Activated CD8-positive, alpha-beta T cell treated with anti-CD3 and anti-CD28 coated beads for 36 hours (primary cell): ENCODE measurements at regions of chr14 and their contacts with region 1.

Region 1: GRCh38 chr14:93173943-93174395 is 10.7 kb downstream of the MOAP1 start:
- DNase-seq: peak; percentile 22
- ATAC-seq: no peak
- H3K4me3 Mint-ChIP-seq: no peak overlapping the region
- H3K27ac Mint-ChIP-seq: no peak overlapping the region
- H3K4me1 Mint-ChIP-seq: peaks cover 1% of the 10 kb centered on the region
- H3K27me3 Mint-ChIP-seq: no peaks in the 10 kb centered on the region
- CTCF ChIP-seq: no peak

Region 2: GRCh38 chr14:93160353-93160801 is 13.6 kb before region 1 on chr14:
- CTCF ChIA-PET with region 1: interaction called, 10 read pairs
- POLR2A ChIA-PET with region 1: no interaction called
- intact Hi-C with region 1: no loop called
- DNase-seq: peak; percentile 38
- ATAC-seq: peak; percentile 61
- H3K4me3 Mint-ChIP-seq: no peak overlapping the region
- H3K27ac Mint-ChIP-seq: no peak overlapping the region
- H3K4me1 Mint-ChIP-seq: no peaks in the 10 kb centered on the region
- H3K27me3 Mint-ChIP-seq: no peaks in the 10 kb centered on the region
- CTCF ChIP-seq: no peak

Region 3: GRCh38 chr14:93184388-93185353 is 10.7 kb after region 1 on chr14 and contains the starts of genes LYSET and MOAP1:
- CTCF ChIA-PET with region 1: interaction called, 16 read pairs
- POLR2A ChIA-PET with region 1: interaction called, 3 read pairs
- intact Hi-C with region 1: no loop called
- DNase-seq: peak; percentile 92
- ATAC-seq: peak; percentile 89
- H3K4me3 Mint-ChIP-seq: peak within 1 kb of the TSS; percentile 97
- H3K27ac Mint-ChIP-seq: peak within 1 kb of the TSS; percentile 91
- H3K4me1 Mint-ChIP-seq: peaks cover 43% of the 10 kb centered on the region
- H3K27me3 Mint-ChIP-seq: no peaks in the 10 kb centered on the region
- CTCF ChIP-seq: peak; percentile 11
- total RNA-seq, gene LYSET: 13.6 to 15.5 TPM
- total RNA-seq, gene MOAP1: 19.1 to 19.6 TPM